Tibial artery (tissue), 4 donors: ENCODE measurements at regions of chr15 and their contacts with region 1.

Region 1: GRCh38 chr15:40941528-40942336 is 11.5 kb upstream of the CHAC1 start:
- DNase-seq: peak; percentile 73 to 85
- H3K4me3 ChIP-seq: peak overlapping the region; percentile 60 to 62
- H3K27ac ChIP-seq: peak overlapping the region; percentile 87 to 89
- H3K4me1 ChIP-seq: peaks cover 0 to 50% (median 26%) of the 10 kb centered on the region in 4 donors
- H3K27me3 ChIP-seq: no peaks in the 10 kb centered on the region
- CTCF ChIP-seq: peak; percentile 45 to 95

Region 2: DNA sequence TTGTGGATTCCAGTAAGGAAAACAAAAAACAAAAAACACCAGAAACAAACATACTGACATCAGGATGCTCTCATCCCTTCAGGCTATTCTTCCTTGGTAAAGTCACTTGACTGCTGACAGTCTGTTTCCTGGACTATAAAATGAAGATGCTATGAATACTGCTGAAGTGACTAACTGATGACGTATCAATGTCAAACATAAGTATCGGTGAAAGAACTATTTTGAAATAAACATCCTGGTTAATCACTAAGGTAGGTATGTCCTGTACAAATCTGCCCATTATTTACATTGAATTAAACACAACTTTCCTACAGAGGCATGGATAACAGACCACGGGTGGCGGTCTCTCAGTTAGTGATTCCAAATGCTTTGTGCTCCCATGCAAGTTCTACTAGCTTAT is 57.5 kb after region 1 on chr15:
- intact Hi-C with region 1: no loop called
- DNase-seq: no peak
- H3K4me3 ChIP-seq: no peak overlapping the region
- H3K27ac ChIP-seq: no peak overlapping the region
- H3K4me1 ChIP-seq: peaks cover 0 to 11% (median 5%) of the 10 kb centered on the region in 4 donors
- H3K27me3 ChIP-seq: no peaks in the 10 kb centered on the region
- CTCF ChIP-seq: no peak

Region 3: GRCh38 chr15:41022487-41023090 is 80.9 kb after region 1 on chr15:
- intact Hi-C with region 1: loop called (anchors 5 kb)
- DNase-seq: peak in 1 of 2 donors; percentile 25
- H3K4me3 ChIP-seq: no peak overlapping the region
- H3K27ac ChIP-seq: peak overlapping the region; percentile 40 to 76
- H3K4me1 ChIP-seq: peaks cover 0 to 64% (median 42%) of the 10 kb centered on the region in 4 donors
- H3K27me3 ChIP-seq: no peaks in the 10 kb centered on the region
- CTCF ChIP-seq: peak; percentile 69